Lower leg skin (tissue), 4 donors: ENCODE measurements at regions of chr2 and their contacts with region 1.

Region 1: GRCh38 chr2:120520929-120521912 is 175.3 kb downstream of the INHBB start:
- DNase-seq: no peak
- H3K4me3 ChIP-seq: no peak overlapping the region
- CTCF ChIP-seq: peak in 1 of 3 donors; percentile 71
- POLR2A ChIP-seq: no peak

Region 2: GRCh38 chr2:120436885-120437603 is 84.2 kb before region 1 on chr2:
- intact Hi-C with region 1: no loop called
- DNase-seq: peak in 1 of 2 donors; percentile 90
- H3K4me3 ChIP-seq: no peak overlapping the region
- CTCF ChIP-seq: no peak
- POLR2A ChIP-seq: no peak

Region 3: GRCh38 chr2:120680136-120680761 is 159.0 kb after region 1 on chr2:
- intact Hi-C with region 1: loop called (anchors 10 kb)
- DNase-seq: peak; percentile 84 to 97
- H3K4me3 ChIP-seq: no peak overlapping the region
- CTCF ChIP-seq: peak in 1 of 3 donors; percentile 84
- POLR2A ChIP-seq: no peak